ENCODE measurements at regions of chr10 and their contacts with region 1.

Region 1: GRCh38 chr10:91298224-91298871 is 77.9 kb downstream of the PCGF5 start:
- DNase-seq: no peak
- H3K4me3 ChIP-seq: peak overlapping the region; percentile 54
- CTCF ChIP-seq: peak; percentile 96

Region 2: DNA sequence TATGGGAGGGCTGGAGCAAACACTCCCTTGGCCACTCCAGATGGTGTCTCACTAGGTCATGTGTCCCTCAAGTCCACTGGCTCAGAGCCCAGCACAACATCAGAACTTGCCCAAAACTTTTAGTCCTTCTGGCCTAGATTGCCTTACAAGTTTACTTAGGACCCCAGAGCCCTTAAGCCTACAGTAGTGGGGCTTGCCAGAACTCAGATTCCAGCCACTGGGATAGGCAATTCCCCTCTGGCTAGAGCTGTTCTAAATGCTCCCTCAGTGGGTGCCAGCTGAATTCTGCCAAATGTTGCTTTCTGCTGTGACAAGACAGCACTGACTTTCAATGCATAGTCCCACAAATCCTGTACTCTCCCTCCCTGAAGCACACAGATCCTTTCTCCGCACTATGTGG is 771.6 kb before region 1 on chr10:
- CTCF ChIA-PET with region 1: no interaction called
- POLR2A ChIA-PET with region 1: no interaction called
- DNase-seq: no peak
- H3K4me3 ChIP-seq: no peak overlapping the region
- CTCF ChIP-seq: no peak

Region 3: DNA sequence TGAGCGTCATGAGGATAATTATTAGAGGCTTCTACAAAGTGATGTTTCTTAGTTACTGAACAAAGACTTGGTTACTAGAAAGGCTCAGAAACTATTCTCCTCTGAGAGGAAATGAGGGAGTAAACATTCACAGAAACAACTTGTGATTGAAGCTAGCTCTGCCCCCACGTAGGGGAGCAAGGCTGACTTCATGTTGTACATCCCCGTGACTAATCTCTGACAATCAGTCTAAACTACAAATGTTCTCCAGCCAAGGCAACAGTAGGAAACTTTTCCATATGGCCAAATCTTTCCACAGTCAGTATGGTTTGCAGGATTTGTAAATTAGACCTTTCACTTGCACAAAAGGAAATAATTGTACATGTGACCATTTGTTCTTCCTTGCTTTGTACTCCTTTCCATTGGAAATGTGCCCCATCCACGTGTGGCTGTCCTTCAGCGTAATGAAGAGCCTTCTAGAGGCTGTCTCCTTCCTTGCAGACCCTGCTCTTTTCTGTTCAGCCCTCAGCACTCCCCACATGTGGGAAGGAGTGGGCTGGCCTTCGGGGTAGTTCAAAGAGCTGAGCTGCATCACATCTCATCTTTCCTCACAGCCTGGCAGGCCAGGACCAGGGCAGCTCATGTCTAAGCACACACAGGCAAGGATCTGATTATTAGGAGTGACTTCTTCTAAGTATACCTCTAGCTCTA is 15.6 kb after region 1 on chr10:
- CTCF ChIA-PET with region 1: interaction called, 113 read pairs
- POLR2A ChIA-PET with region 1: interaction called, 3 read pairs
- DNase-seq: no peak
- H3K4me3 ChIP-seq: no peak overlapping the region
- CTCF ChIP-seq: no peak

Region 4: GRCh38 chr10:91354166-91355075 is 56.1 kb after region 1 on chr10:
- CTCF ChIA-PET with region 1: interaction called, 15 read pairs
- POLR2A ChIA-PET with region 1: no interaction called
- DNase-seq: no peak
- H3K4me3 ChIP-seq: no peak overlapping the region
- CTCF ChIP-seq: no peak

Region 5: DNA sequence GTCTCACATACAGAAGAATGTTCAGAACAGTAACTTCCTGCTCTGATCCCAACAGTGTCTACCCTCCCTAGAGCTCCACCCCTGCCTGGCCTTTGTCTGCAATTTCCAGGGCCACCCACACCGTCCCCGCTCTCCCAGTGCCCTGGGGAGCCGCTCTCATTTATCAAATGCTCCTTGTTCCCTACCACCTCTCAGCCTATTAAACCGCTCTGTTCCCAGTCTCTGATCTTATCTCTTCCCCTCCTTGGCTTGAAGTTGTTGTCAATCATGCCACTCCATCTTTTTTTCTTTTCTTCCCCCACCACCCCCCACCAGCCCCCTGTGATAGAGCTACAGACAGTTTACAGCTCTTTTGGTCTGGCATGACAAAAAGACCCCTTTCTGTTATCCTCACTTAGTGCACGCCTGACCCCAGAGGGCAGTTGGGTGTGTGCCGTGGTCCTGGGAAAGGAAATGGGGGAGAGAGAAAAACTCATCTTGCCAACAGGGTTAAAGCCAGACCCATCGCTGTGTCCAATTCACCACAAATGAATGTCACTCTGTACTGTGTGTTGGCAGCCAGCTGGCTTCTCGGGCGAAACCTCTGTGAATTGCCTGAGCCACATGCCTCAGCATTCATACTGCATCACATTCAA is 83.0 kb after region 1 on chr10:
- CTCF ChIA-PET with region 1: interaction called, 31 read pairs
- POLR2A ChIA-PET with region 1: no interaction called
- DNase-seq: no peak
- H3K4me3 ChIP-seq: no peak overlapping the region
- CTCF ChIP-seq: no peak

Region 6: GRCh38 chr10:91493313-91493712 is 195.0 kb after region 1 on chr10:
- CTCF ChIA-PET with region 1: interaction called, 16 read pairs
- POLR2A ChIA-PET with region 1: no interaction called
- DNase-seq: peak; percentile 16
- H3K4me3 ChIP-seq: no peak overlapping the region
- CTCF ChIP-seq: no peak

Region 7: DNA sequence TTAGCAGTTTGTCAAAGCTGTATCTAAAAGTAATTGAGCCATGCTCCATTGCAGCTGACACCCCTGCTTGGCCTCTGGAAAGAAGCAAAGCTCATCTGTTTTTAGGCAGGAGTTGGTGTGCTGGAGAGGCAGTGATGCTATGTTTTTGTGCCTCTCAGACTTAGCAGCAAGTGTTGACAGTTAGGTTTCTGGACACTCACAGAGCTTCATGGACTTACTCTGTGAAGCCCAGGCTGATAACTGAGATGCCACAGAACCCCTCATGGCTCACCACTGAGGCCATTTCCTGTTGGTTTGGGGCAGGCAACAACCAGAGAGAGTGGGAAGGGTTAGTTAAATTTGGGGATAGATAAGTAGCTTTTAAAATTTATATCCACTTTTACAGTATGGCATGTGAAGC is 685.1 kb after region 1 on chr10:
- CTCF ChIA-PET with region 1: no interaction called
- POLR2A ChIA-PET with region 1: no interaction called
- DNase-seq: no peak
- H3K4me3 ChIP-seq: no peak overlapping the region
- CTCF ChIP-seq: no peak